Mammary epithelial cell (primary cell): ENCODE measurements at regions of chr16 and their contacts with region 1.

Region 1: GRCh38 chr16:81645266-81645694 is 133.8 kb upstream of the PLCG2 start:
- DNase-seq: peak; percentile 89
- H3K4me3 ChIP-seq: peak overlapping the region in 1 of 3 experiments; percentile 1
- H3K27ac ChIP-seq: peak overlapping the region; percentile 77
- H3K4me1 ChIP-seq: peaks cover 29% of the 10 kb centered on the region
- H3K27me3 ChIP-seq: no peaks in the 10 kb centered on the region
- CTCF ChIP-seq: no peak

Region 2: DNA sequence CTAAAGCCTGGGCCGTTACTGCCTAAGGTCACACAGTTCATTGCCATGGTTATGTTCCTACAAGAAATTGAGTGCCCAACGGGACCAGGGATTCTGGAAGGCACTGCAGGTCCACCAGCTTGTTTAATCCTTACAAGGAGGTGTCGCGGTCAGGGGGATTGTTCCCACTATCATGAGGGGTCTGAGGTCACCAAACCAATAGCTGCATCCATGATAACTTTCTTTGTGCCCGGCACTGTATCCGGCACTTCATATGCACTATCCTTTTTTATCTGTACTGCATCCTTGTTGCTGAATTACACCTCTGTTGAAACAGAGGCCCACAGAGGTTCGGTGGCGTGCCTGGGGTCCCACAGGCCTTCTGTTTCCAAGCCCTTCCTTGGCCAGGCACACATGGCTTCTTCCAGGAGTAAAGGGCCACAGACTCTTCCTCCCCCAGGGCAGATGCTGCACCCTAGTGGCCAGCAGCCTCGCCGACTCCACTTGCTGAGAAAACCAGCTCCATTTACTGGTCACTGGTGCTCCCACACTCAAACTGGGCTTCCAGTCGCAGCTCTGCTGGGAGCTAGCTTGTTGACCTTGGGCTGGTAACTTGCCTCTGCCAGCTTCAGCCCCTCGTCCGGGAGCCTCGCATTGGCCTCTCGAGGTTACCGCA is 51.8 kb after region 1 on chr16:
- CTCF ChIA-PET with region 1: no interaction called
- dilution Hi-C with region 1: no loop called
- in situ Hi-C with region 1: no loop called
- intact Hi-C with region 1: loop called (anchors 5 kb)
- DNase-seq: peak; percentile 48
- H3K4me3 ChIP-seq: no peak overlapping the region
- H3K27ac ChIP-seq: no peak overlapping the region
- H3K4me1 ChIP-seq: peaks cover 40% of the 10 kb centered on the region
- H3K27me3 ChIP-seq: no peaks in the 10 kb centered on the region
- CTCF ChIP-seq: peak; percentile 76 to 80